ENCODE measurements at regions of chr16 and their contacts with region 1.

Region 1: GRCh38 chr16:8936421-8936820 is 27.3 kb downstream of the USP7 start:
- DNase-seq: peak; percentile 64
- H3K4me3 Mint-ChIP-seq: no peak overlapping the region
- H3K27ac Mint-ChIP-seq: no peak overlapping the region
- H3K4me1 Mint-ChIP-seq: peaks cover 28% of the 10 kb centered on the region
- H3K27me3 Mint-ChIP-seq: no peaks in the 10 kb centered on the region
- CTCF ChIP-seq: peak; percentile 44

Region 2: GRCh38 chr16:8912793-8913192 is 23.6 kb before region 1 on chr16:
- CTCF ChIA-PET with region 1: interaction called, 11 read pairs
- POLR2A ChIA-PET with region 1: no interaction called
- intact Hi-C with region 1: no loop called
- DNase-seq: no peak
- H3K4me3 Mint-ChIP-seq: no peak overlapping the region
- H3K27ac Mint-ChIP-seq: no peak overlapping the region
- H3K4me1 Mint-ChIP-seq: no peaks in the 10 kb centered on the region
- H3K27me3 Mint-ChIP-seq: no peaks in the 10 kb centered on the region
- CTCF ChIP-seq: no peak

Region 3: DNA sequence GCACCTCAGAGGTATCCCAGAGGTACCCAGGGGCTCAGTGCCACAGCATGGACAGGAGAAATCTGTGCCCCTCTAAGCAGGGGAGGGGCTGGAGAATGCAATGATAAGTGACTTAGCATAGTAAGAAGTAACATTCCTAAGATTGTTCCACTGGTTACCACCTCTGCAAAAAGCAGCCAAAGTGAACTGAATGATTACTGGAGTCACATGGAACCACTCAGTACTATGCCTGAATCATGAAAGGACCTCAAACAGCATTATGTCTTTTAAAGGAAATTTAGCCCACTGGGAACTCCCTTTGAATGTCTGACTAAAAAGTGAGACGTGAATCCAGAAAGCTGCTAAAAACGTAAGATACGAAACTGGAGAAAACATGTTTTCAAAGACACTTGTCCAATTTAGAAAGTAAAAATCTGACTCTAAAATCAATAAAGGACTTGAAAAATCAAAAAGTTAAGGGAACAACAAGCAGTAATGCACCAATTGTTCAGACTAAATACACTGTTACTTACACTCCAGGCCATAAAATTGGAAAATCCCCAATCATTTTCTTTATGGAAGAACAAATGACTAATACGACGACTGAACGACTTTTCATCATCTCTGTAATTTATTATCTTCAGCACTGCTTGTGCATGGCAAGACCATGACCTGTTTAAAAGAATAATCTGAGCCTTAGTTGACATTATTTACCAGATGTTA is 15.6 kb before region 1 on chr16:
- CTCF ChIA-PET with region 1: interaction called, 16 read pairs
- POLR2A ChIA-PET with region 1: no interaction called
- intact Hi-C with region 1: no loop called
- DNase-seq: no peak
- H3K4me3 Mint-ChIP-seq: no peak overlapping the region
- H3K27ac Mint-ChIP-seq: no peak overlapping the region
- H3K4me1 Mint-ChIP-seq: peaks cover 5% of the 10 kb centered on the region
- H3K27me3 Mint-ChIP-seq: no peaks in the 10 kb centered on the region
- CTCF ChIP-seq: no peak

Region 4: DNA sequence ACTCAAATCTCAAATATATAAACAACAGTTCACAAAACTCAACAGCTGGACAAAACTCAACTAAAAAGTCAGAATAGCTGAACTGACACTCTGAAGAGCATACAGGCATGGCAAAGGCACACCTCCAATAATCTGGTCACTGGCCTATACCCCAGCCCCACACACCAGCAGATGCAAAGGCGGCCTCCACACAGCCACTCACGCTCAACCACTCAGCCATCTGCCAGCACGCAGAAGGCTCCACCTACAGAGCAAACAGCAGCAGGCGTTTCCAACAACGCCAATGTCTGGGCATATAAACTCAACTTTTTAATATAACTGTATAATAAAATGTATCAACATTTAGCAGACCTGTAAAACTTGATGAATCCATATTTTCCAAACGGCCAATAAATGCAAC is 10.1 kb after region 1 on chr16:
- CTCF ChIA-PET with region 1: interaction called, 51 read pairs
- POLR2A ChIA-PET with region 1: interaction called, 3 read pairs
- intact Hi-C with region 1: no loop called
- DNase-seq: no peak
- H3K4me3 Mint-ChIP-seq: no peak overlapping the region
- H3K27ac Mint-ChIP-seq: no peak overlapping the region
- H3K4me1 Mint-ChIP-seq: peaks cover 18% of the 10 kb centered on the region
- H3K27me3 Mint-ChIP-seq: no peaks in the 10 kb centered on the region
- CTCF ChIP-seq: no peak

Region 5: DNA sequence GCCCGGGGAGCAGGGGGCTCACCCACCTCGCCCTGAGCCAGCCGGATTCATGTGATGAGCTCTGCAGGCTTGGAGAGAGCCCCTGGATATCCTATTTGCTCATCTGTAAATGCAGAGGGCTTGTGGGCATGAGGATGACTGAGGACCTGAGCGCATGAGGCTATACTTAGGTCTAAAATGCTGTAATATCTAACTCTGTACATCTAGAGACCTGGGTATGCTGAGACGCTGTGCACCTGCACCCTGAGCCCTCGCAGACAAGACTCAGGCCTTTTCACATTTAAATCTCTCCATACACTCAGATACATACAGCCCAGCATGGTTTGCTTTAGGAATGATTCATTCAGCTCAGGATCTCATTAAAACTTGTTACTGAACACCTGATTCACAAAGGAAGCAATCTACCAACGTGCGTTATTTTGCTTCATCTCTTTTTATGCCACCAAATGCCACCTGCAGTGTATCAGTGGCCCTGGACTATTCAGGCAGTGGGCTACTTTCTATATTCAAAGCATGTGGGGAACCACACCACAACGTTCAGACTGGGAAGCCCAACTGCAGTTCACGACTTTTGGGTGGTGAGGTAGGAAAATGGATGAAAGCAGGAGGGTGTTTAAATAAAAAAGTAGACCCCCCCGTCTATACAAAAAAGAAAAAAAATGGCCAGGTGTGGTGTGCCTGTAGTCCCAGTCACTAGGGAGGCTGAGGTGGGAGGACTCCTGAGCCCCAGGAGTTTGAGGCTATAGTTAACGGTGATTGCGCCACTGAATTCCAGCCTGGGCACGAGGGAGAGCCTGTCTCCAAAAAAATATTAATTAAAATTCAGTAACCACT is 15.2 kb after region 1 on chr16:
- CTCF ChIA-PET with region 1: interaction called, 51 read pairs
- POLR2A ChIA-PET with region 1: interaction called, 3 read pairs
- intact Hi-C with region 1: no loop called
- DNase-seq: no peak
- H3K4me3 Mint-ChIP-seq: no peak overlapping the region
- H3K27ac Mint-ChIP-seq: no peak overlapping the region
- H3K4me1 Mint-ChIP-seq: peaks cover 24% of the 10 kb centered on the region
- H3K27me3 Mint-ChIP-seq: no peaks in the 10 kb centered on the region
- CTCF ChIP-seq: no peak

Region 6: GRCh38 chr16:8958344-8959167 is 22.1 kb after region 1 on chr16:
- CTCF ChIA-PET with region 1: interaction called, 14 read pairs
- POLR2A ChIA-PET with region 1: no interaction called
- intact Hi-C with region 1: no loop called
- DNase-seq: no peak
- H3K4me3 Mint-ChIP-seq: no peak overlapping the region
- H3K27ac Mint-ChIP-seq: peak overlapping the region; percentile 23
- H3K4me1 Mint-ChIP-seq: peaks cover 51% of the 10 kb centered on the region
- H3K27me3 Mint-ChIP-seq: no peaks in the 10 kb centered on the region
- CTCF ChIP-seq: no peak

Region 7: DNA sequence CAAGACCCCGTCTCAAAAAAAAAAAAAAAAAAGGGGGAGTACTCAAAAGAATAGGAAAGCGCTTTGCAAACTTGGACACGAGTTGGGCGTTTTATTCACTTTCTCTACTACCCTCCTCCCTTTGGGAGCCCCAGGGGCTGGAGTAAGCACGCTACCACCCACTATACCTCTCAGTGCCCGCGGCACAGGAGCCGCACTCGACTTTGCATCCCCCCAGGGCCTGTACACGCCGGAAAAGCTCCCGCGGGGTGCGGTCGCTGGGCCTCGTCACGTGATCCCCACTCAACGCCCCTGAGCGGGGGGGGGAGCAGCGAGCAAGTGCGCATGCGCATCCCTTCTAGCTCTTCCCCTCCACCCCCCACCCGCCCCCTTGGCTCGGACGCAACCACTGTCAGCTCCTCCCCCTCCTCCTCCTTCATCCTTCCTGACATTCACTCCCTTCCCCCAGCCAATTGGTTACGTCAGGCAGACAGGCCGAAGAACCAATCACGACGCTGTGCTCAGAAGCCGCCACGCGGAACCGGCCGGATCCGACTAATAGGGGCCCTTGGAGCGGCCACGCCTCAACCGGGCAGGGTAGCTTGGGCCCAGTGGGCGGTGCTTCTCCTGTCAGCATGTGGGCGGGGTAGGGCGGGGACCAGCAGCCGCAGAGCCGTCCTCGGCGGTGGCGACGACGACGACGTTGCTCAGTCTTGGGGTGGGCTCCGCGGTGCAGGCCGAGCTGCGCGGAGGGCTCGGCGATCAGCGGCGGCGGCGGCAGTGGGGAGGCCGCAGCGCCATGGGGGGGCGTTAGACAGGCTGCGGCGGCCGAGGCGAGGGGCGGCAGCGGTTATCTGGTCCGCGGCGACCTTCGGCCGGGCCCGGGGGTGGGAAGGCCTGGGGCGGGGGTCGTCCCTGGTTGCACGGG is 154.8 kb after region 1 on chr16 and contains the start of gene HAPSTR1:
- CTCF ChIA-PET with region 1: no interaction called
- POLR2A ChIA-PET with region 1: no interaction called
- intact Hi-C with region 1: loop called (anchors 10 kb)
- DNase-seq: peak; percentile 100
- H3K4me3 Mint-ChIP-seq: peak within 1 kb of the TSS; percentile 87
- H3K27ac Mint-ChIP-seq: peak within 1 kb of the TSS; percentile 95
- H3K4me1 Mint-ChIP-seq: peaks cover 30% of the 10 kb centered on the region
- H3K27me3 Mint-ChIP-seq: no peaks in the 10 kb centered on the region
- CTCF ChIP-seq: no peak
- total RNA-seq, gene HAPSTR1: 87.4 and 88.9 TPM in 2 replicates

Measured in MCF 10A (cell line).